ENCODE measurements at regions of chr1 and their contacts with region 1.

Region 1: GRCh38 chr1:223133824-223134435 is 9.1 kb downstream of the TLR5 start:
- DNase-seq: peak; percentile 69 to 73 (median 73)
- H3K4me3 ChIP-seq: peak overlapping the region; percentile 13
- H3K4me3 Mint-ChIP-seq: peak overlapping the region; percentile 32 to 79 (median 70)
- H3K27ac ChIP-seq: no peak overlapping the region
- H3K27ac Mint-ChIP-seq: no peak overlapping the region
- H3K4me1 ChIP-seq: peaks cover 10% of the 10 kb centered on the region
- H3K4me1 Mint-ChIP-seq: peaks cover 7 to 23% (median 13%) of the 10 kb centered on the region in 4 donors
- H3K27me3 ChIP-seq: peaks cover 4% of the 10 kb centered on the region
- H3K27me3 Mint-ChIP-seq: peaks cover 9 to 14% of the 10 kb centered on the region in 2 donors

Region 2: GRCh38 chr1:221497046-221497445 is 1636.9 kb before region 1 on chr1:
- CTCF ChIA-PET with region 1: no interaction called
- POLR2A ChIA-PET with region 1: no interaction called
- intact Hi-C with region 1: no loop called
- DNase-seq: no peak
- H3K4me3 ChIP-seq: no peak overlapping the region
- H3K4me3 Mint-ChIP-seq: no peak overlapping the region
- H3K27ac ChIP-seq: no peak overlapping the region
- H3K27ac Mint-ChIP-seq: no peak overlapping the region
- H3K4me1 ChIP-seq: no peaks in the 10 kb centered on the region
- H3K4me1 Mint-ChIP-seq: no peaks in the 10 kb centered on the region
- H3K27me3 ChIP-seq: no peaks in the 10 kb centered on the region
- H3K27me3 Mint-ChIP-seq: peaks cover 3 to 8% of the 10 kb centered on the region in 2 donors

Region 3: GRCh38 chr1:223041473-223041872 is 92.5 kb before region 1 on chr1:
- CTCF ChIA-PET with region 1: no interaction called
- POLR2A ChIA-PET with region 1: no interaction called
- intact Hi-C with region 1: no loop called
- DNase-seq: no peak
- H3K4me3 ChIP-seq: no peak overlapping the region
- H3K4me3 Mint-ChIP-seq: no peak overlapping the region
- H3K27ac ChIP-seq: no peak overlapping the region
- H3K27ac Mint-ChIP-seq: no peak overlapping the region
- H3K4me1 ChIP-seq: no peaks in the 10 kb centered on the region
- H3K4me1 Mint-ChIP-seq: no peaks in the 10 kb centered on the region
- H3K27me3 ChIP-seq: no peaks in the 10 kb centered on the region
- H3K27me3 Mint-ChIP-seq: peaks cover 7 to 14% of the 10 kb centered on the region in 2 donors

Region 4: GRCh38 chr1:223161321-223161720 is 27.4 kb after region 1 on chr1:
- CTCF ChIA-PET with region 1: interaction called, 252 read pairs
- POLR2A ChIA-PET with region 1: no interaction called
- intact Hi-C with region 1: no loop called
- DNase-seq: no peak
- H3K4me3 ChIP-seq: no peak overlapping the region
- H3K4me3 Mint-ChIP-seq: no peak overlapping the region
- H3K27ac ChIP-seq: no peak overlapping the region
- H3K27ac Mint-ChIP-seq: peak overlapping the region in 2 of 7 donors; percentile 18 to 50
- H3K4me1 ChIP-seq: no peaks in the 10 kb centered on the region
- H3K4me1 Mint-ChIP-seq: no peaks in the 10 kb centered on the region
- H3K27me3 ChIP-seq: no peaks in the 10 kb centered on the region
- H3K27me3 Mint-ChIP-seq: peaks cover 3% of the 10 kb centered on the region in 2 donors

Region 5: DNA sequence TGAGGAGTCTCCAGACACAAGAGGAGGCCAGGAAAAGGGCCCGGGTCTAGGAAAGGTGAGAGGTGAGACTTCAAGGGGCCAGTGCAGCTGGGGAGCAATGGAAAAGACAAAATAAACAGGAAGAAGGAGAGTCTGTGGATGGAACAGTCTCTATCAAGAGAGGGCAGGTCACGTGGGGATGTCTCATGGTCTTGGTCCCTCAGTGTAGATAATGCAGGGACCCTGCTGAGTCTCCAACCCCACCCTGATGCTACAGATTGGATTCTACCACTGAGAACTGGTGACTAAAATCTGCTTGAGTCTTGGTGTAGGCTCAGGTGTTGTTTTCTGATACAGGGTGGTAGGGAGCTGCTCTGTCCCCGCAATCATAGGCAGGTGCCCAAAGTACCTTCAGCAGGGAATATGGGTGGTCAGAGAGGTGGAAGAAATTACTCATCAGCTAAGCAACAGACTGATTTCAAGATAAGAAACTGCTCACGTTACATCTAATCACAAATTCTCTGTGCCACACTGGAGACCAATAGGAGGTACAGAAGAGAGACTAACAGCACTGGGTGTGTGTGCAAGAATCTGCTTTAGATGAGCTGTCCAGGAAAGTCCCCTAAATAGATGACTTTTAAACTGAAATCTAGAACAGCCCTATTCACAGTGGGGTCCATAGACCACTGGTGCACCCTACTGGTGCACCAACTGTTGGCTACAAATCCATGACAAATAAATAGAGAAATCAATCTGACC is 110.6 kb after region 1 on chr1:
- CTCF ChIA-PET with region 1: interaction called, 17 read pairs
- POLR2A ChIA-PET with region 1: interaction called, 6 read pairs
- intact Hi-C with region 1: loop called (anchors 1 kb)
- DNase-seq: peak in 2 of 5 donors; percentile 16 to 43
- H3K4me3 ChIP-seq: no peak overlapping the region
- H3K4me3 Mint-ChIP-seq: no peak overlapping the region
- H3K27ac ChIP-seq: no peak overlapping the region
- H3K27ac Mint-ChIP-seq: peak overlapping the region in 3 of 7 donors; percentile 5 to 81 (median 26)
- H3K4me1 ChIP-seq: peaks cover 39% of the 10 kb centered on the region
- H3K4me1 Mint-ChIP-seq: peaks cover 22 to 45% (median 32%) of the 10 kb centered on the region in 4 donors
- H3K27me3 ChIP-seq: no peaks in the 10 kb centered on the region
- H3K27me3 Mint-ChIP-seq: peaks cover 4 to 5% of the 10 kb centered on the region in 2 donors

Region 6: DNA sequence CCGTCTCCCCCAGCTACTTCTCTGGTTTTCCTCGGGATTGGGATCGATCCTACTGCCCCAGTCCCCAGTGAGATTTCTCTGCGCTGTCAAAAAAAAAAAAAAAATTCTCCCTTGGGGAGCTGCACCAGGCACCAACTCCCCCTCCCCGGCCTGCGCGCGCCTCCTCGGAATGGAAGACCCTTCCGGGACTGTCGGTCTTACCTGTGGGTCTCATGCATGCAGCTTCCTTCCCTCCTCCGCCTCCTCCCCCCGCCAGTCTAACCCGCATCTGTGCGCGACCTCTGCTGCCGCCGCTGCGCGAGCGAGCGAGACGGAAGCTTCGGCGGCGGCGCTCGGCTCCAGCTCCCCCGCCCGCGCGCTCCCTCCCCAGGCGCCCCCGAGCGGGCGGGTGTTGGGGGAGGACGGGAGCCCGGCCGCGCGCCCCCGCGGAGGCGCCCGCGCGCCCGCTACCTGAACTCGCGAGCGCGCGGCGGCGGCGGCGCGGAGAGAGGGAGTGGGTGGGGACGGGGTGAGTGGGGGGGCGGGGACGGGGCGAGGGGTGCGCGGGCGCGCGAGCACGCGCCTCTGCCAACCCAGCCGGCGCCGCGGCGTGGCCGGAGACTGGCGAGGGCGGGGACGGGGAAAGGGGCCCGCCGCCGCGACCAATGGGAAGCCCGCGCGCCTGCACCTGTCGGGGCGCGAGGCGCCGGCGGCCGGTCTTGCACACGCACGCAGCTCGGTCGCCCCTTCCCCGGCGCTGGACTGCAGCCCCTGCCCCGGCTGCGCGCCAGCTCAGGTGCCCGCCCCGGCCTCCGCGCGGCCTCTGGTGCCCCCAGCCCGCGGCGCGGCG is 230.1 kb after region 1 on chr1 and contains the start of gene SUSD4:
- CTCF ChIA-PET with region 1: interaction called, 32 read pairs
- POLR2A ChIA-PET with region 1: interaction called, 4 read pairs
- intact Hi-C with region 1: loop called (anchors 5 kb)
- DNase-seq: peak; percentile 71 to 82 (median 78)
- H3K4me3 ChIP-seq: peak within 1 kb of the TSS; percentile 33 to 59
- H3K4me3 Mint-ChIP-seq: peak within 1 kb of the TSS; percentile 89 to 94 (median 92)
- H3K27ac ChIP-seq: no peak within 1 kb of the TSS
- H3K27ac Mint-ChIP-seq: peak within 1 kb of the TSS in 6 of 7 donors; percentile 57 to 87 (median 82)
- H3K4me1 ChIP-seq: peaks cover 19% of the 10 kb centered on the region
- H3K4me1 Mint-ChIP-seq: peaks cover 12 to 32% (median 18%) of the 10 kb centered on the region in 4 donors
- H3K27me3 ChIP-seq: no peaks in the 10 kb centered on the region
- H3K27me3 Mint-ChIP-seq: peaks cover 0 to 4% of the 10 kb centered on the region in 2 donors
- total RNA-seq, gene SUSD4: 2.9 to 3.0 TPM

Region 7: DNA sequence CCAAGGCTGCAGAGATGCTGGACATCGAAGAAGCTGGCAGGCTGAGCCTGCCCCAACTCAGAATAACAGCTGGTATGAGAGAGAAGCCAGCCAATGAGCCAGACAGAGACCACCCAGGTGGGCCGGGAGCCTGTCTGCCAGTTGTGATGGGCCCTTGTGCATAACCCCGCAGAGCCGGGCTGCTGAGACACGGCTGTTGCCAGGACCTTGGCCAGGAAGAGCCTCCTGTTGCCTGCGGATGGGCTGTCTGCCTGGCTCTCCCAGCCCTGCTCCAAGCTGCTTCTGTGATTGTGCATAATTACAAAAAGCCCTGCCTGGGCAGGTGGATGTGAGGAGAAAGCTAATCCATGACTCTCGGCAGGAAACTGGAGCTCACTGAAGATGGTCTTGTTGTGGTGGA is 405.1 kb after region 1 on chr1:
- CTCF ChIA-PET with region 1: no interaction called
- POLR2A ChIA-PET with region 1: no interaction called
- intact Hi-C with region 1: no loop called
- DNase-seq: no peak
- H3K4me3 ChIP-seq: no peak overlapping the region
- H3K4me3 Mint-ChIP-seq: no peak overlapping the region
- H3K27ac ChIP-seq: no peak overlapping the region
- H3K27ac Mint-ChIP-seq: no peak overlapping the region
- H3K4me1 ChIP-seq: no peaks in the 10 kb centered on the region
- H3K4me1 Mint-ChIP-seq: no peaks in the 10 kb centered on the region
- H3K27me3 ChIP-seq: no peaks in the 10 kb centered on the region
- H3K27me3 Mint-ChIP-seq: peaks cover 0 to 5% of the 10 kb centered on the region in 2 donors

Region 8: DNA sequence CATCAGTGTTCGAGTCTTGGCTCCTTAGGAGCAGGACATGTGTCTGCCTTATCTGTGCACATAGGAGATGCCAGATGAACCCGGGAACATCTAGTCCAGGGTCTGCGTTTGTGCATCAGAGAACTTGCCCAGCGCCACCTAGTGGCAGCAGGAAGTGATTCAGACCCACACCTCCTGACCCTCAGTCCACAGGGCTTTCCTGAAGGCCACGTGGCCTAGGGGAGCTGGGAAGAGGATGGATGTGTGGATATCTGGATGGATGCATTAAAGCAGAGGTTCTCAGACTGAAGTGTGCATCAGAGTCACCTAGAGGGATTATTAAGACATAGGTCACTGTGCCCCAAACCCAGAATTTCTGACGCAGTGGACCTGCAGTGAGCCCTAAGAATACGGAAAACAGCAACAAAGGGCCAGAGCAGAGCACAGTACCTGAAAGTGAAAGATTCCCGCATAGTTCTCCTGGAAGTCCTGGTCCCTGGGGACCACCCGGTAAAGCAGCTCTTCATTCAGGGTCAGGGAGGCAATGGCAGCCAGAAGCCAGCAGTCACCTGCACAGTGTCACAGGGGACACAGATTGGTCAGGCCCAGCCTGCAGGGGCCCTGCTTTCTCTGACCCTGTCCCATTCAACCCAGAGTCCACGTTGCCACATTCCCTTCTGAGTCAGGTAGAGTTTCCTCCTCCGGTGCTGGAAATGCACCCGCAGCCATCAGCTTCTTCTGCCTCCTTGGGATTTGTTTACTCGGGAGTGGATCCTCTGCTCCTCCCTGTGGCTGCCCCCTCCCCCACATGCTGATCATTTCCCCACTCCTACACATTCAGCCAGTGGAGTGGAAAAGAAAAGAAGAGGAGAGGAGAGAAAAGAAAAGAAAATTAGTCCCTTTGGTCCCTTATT is 494.5 kb after region 1 on chr1:
- CTCF ChIA-PET with region 1: interaction called, 11 read pairs
- POLR2A ChIA-PET with region 1: no interaction called
- intact Hi-C with region 1: loop called (anchors 5 kb)
- DNase-seq: peak in 4 of 5 donors; percentile 15 to 36 (median 20)
- H3K4me3 ChIP-seq: no peak overlapping the region
- H3K4me3 Mint-ChIP-seq: no peak overlapping the region
- H3K27ac ChIP-seq: no peak overlapping the region
- H3K27ac Mint-ChIP-seq: peak overlapping the region in 1 of 7 donors; percentile 23
- H3K4me1 ChIP-seq: no peaks in the 10 kb centered on the region
- H3K4me1 Mint-ChIP-seq: no peaks in the 10 kb centered on the region
- H3K27me3 ChIP-seq: no peaks in the 10 kb centered on the region
- H3K27me3 Mint-ChIP-seq: peaks cover 0 to 4% of the 10 kb centered on the region in 2 donors

Region 9: GRCh38 chr1:223683586-223684487 is 549.9 kb after region 1 on chr1:
- CTCF ChIA-PET with region 1: interaction called, 95 read pairs
- POLR2A ChIA-PET with region 1: no interaction called
- intact Hi-C with region 1: loop called (anchors 1 kb)
- DNase-seq: peak; percentile 43 to 61 (median 52)
- H3K4me3 ChIP-seq: no peak overlapping the region
- H3K4me3 Mint-ChIP-seq: no peak overlapping the region
- H3K27ac ChIP-seq: no peak overlapping the region
- H3K27ac Mint-ChIP-seq: peak overlapping the region in 1 of 7 donors; percentile 67
- H3K4me1 ChIP-seq: no peaks in the 10 kb centered on the region
- H3K4me1 Mint-ChIP-seq: no peaks in the 10 kb centered on the region
- H3K27me3 ChIP-seq: no peaks in the 10 kb centered on the region
- H3K27me3 Mint-ChIP-seq: peaks cover 8 to 9% of the 10 kb centered on the region in 2 donors

Measured in CD4-positive, alpha-beta memory T cell (primary cell).